MCF 10A (cell line): ENCODE measurements at regions of chr9 and their contacts with region 1.

Region 1: DNA sequence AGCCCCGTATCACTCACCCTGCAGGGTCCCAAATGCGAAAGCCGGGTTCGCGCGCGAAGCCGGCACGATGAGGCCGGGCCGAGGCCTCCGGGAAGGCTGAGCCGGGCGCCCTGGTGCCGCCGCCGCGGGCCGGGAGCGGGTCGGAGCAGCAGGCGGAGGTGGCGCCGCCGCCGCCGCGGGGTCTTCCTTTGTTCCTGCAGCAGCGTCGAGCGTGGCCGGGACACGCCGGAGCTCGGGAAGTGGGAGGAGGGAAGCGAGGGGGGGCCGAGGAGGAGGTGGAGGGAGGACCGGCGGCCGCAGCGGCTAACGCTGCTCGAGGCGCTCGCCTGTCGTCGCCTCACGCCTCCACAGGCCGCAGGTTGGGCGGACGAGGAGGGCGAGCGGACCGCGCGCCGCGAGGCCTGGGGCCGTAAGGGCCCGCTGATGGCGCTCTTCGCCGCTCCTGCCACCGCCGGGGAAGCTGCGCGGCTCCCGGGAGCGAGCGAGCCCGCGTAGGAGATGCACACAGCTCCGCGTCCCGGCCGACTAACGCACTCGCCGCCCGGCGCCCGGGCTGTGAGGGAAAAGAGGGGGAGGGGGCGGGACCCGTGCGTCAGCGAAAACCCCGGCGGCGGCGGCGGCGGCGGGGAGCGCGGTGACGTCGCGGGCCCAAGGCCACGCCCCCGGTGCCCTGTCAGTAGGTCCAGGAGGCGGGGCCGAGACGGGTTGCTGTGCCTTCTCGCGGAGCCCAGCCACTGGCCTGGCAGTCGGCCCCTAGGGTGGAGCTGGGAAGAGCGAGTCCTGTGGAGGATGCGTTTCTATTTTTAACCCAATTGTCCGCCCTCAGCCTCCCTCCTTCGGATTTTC is at the start of gene ZFAND5:
- DNase-seq: peak; percentile 98
- H3K4me3 Mint-ChIP-seq: peak within 1 kb of the TSS; percentile 78
- H3K27ac Mint-ChIP-seq: peak within 1 kb of the TSS; percentile 99
- H3K4me1 Mint-ChIP-seq: peaks cover 12% of the 10 kb centered on the region
- H3K27me3 Mint-ChIP-seq: no peaks in the 10 kb centered on the region
- CTCF ChIP-seq: no peak
- total RNA-seq, gene ZFAND5: 91.7 and 107 TPM in 2 replicates

Region 2: DNA sequence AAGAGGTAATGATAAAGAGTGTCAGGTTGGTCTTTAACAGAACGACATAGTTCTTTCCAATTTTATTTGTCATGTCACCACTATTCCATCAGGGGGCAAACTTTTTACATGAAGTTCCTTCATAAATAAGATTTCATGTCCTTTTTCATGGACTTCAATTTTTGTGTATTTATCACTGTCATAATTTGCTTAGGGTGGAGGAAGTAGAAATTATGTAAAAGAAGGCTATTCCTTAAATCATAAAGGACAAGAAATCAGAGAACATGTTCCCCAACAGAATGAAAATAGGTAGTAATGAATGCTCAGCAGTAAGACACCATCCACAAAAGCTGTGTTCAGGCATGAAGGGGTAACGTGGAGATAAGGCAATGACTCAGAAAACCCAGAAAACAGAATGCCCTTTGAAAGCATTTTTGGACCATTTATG is 72.6 kb before region 1 on chr9:
- CTCF ChIA-PET with region 1: interaction called, 8 read pairs
- POLR2A ChIA-PET with region 1: interaction called, 26 read pairs
- intact Hi-C with region 1: loop called (anchors 1 kb)
- DNase-seq: peak; percentile 48
- H3K4me3 Mint-ChIP-seq: no peak overlapping the region
- H3K27ac Mint-ChIP-seq: peak overlapping the region; percentile 75
- H3K4me1 Mint-ChIP-seq: peaks cover 22% of the 10 kb centered on the region
- H3K27me3 Mint-ChIP-seq: no peaks in the 10 kb centered on the region
- CTCF ChIP-seq: peak; percentile 58

Region 3: GRCh38 chr9:72396247-72397091 is 31.6 kb after region 1 on chr9:
- CTCF ChIA-PET with region 1: interaction called, 3 read pairs
- POLR2A ChIA-PET with region 1: interaction called, 33 read pairs
- intact Hi-C with region 1: no loop called
- DNase-seq: peak; percentile 84
- H3K4me3 Mint-ChIP-seq: no peak overlapping the region
- H3K27ac Mint-ChIP-seq: peak overlapping the region; percentile 76
- H3K4me1 Mint-ChIP-seq: peaks cover 14% of the 10 kb centered on the region
- H3K27me3 Mint-ChIP-seq: no peaks in the 10 kb centered on the region
- CTCF ChIP-seq: no peak

Region 4: GRCh38 chr9:72473474-72474261 is 108.8 kb after region 1 on chr9:
- CTCF ChIA-PET with region 1: interaction called, 6 read pairs
- POLR2A ChIA-PET with region 1: interaction called, 72 read pairs
- intact Hi-C with region 1: loop called (anchors 1 kb)
- DNase-seq: no peak
- H3K4me3 Mint-ChIP-seq: no peak overlapping the region
- H3K27ac Mint-ChIP-seq: no peak overlapping the region
- H3K4me1 Mint-ChIP-seq: peaks cover 20% of the 10 kb centered on the region
- H3K27me3 Mint-ChIP-seq: no peaks in the 10 kb centered on the region
- CTCF ChIP-seq: no peak

Region 5: DNA sequence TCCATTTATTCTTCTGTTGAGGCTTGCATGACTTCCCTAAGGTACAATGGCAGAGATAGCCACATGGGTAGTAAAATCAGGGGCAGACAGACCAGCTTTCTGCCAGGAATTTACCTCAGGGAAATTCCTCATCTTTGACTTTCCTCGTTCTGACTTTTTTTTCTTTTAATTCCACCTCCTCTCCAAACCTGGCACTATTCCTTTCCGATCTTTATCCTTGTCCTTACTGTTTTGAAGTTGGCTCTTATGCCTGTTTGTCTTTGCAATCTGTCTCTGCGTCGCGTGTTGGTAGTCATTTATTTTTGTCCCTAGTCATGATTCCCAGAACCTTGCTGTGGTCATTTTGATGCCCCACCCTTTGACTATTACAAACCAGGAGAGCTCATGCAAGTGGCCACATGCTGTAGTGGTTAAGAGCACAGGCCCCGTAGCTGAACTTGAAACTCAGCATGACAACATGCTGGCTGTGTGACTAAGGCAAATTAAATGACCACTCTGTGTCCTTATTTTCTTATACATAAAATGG is 175.5 kb after region 1 on chr9:
- CTCF ChIA-PET with region 1: interaction called, 6 read pairs
- POLR2A ChIA-PET with region 1: interaction called, 74 read pairs
- intact Hi-C with region 1: no loop called
- DNase-seq: peak; percentile 87
- H3K4me3 Mint-ChIP-seq: peak overlapping the region; percentile 4
- H3K27ac Mint-ChIP-seq: peak overlapping the region; percentile 59
- H3K4me1 Mint-ChIP-seq: peaks cover 39% of the 10 kb centered on the region
- H3K27me3 Mint-ChIP-seq: no peaks in the 10 kb centered on the region
- CTCF ChIP-seq: no peak

Region 6: GRCh38 chr9:72592502-72593403 is 227.9 kb after region 1 on chr9:
- CTCF ChIA-PET with region 1: interaction called, 7 read pairs
- POLR2A ChIA-PET with region 1: interaction called, 36 read pairs
- intact Hi-C with region 1: loop called (anchors 1 kb)
- DNase-seq: peak; percentile 66
- H3K4me3 Mint-ChIP-seq: no peak overlapping the region
- H3K27ac Mint-ChIP-seq: no peak overlapping the region
- H3K4me1 Mint-ChIP-seq: peaks cover 15% of the 10 kb centered on the region
- H3K27me3 Mint-ChIP-seq: no peaks in the 10 kb centered on the region
- CTCF ChIP-seq: peak; percentile 64